ENCODE measurements at regions of chr3 and their contacts with region 1.

Region 1: GRCh38 chr3:50337191-50337841 is 3.3 kb downstream of the RASSF1 start:
- DNase-seq: peak; percentile 92 to 99
- H3K4me3 ChIP-seq: peak overlapping the region; percentile 83
- H3K27ac ChIP-seq: peak overlapping the region; percentile 64
- H3K4me1 ChIP-seq: peaks cover 25% of the 10 kb centered on the region
- H3K27me3 ChIP-seq: no peaks in the 10 kb centered on the region
- CTCF ChIP-seq: no peak

Region 2: DNA sequence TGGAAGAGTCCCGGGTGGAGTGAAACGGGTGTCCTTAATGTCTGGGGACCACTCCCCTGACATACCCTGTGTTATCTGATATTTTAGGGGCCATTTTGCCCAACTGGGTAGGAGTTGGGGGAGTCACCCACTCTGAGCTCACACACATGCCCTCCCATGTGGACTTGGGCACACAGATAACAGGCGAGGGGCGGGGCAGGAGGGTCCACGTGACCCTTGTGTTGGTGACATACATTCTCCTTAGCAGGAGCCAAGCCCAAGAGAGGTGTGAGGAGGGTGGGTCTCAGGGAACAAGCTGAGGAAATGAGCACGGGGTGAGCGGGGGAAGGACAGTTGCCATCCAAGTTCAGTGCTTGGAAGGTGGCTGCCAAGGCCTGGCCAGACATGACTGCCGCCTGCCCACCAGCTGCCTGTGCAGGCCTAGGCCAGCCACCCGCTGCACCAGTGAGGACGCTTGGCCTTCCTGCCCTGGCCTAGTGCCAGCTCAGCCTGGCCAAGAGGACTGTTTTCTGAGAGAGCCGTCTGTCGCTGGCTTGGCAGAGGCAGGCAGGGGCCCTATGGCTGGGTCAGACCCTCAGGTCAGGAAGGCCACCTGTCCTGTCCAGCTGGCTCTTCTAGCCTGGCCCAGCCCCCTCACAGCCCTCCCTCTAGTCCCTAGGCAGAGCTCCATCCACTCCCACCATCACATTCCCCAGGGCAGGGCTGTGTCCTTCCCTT is 53.4 kb after region 1 on chr3:
- CTCF ChIA-PET with region 1: interaction called, 10 read pairs
- POLR2A ChIA-PET with region 1: no interaction called
- intact Hi-C with region 1: no loop called
- DNase-seq: peak in 1 of 2 experiments; percentile 46
- H3K4me3 ChIP-seq: no peak overlapping the region
- H3K27ac ChIP-seq: no peak overlapping the region
- H3K4me1 ChIP-seq: peaks cover 8% of the 10 kb centered on the region
- H3K27me3 ChIP-seq: no peaks in the 10 kb centered on the region
- CTCF ChIP-seq: no peak

Measured in PC-9 (cell line).